HAP-1 (cell line): ENCODE measurements at regions of chr11 and their contacts with region 1.

Region 1: DNA sequence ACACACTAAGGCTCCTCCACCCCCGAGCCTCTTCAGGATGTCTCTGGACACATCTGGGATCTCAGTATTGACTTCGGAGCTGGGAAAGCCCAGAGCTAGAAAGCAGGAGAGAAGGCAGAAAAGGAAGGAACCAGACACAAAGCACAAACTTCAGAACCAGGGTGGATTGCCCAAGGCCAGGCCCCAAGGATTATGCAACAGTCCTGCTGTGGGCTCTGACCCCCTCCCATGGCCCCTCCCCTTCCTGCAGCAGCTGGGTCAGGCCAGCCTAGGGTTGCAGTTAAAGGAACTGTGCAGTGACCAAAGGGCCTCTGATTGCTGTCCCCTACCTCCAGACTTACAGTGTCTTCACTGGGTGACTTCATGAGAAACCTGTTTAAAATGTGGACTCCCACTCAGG is 5.3 kb downstream of the KCNE3 start:
- DNase-seq: peak in 1 of 2 experiments; percentile 20
- H3K4me3 ChIP-seq: no peak overlapping the region
- H3K4me1 ChIP-seq: no peaks in the 10 kb centered on the region
- H3K27me3 ChIP-seq: no peaks in the 10 kb centered on the region

Region 2: GRCh38 chr11:74255741-74256369 is 206.2 kb before region 1 on chr11:
- in situ Hi-C with region 1: loop called (anchors 5 kb)
- DNase-seq: peak; percentile 40 to 64
- H3K4me3 ChIP-seq: no peak overlapping the region
- H3K4me1 ChIP-seq: no peaks in the 10 kb centered on the region
- H3K27me3 ChIP-seq: no peaks in the 10 kb centered on the region

Region 3: GRCh38 chr11:74570266-74571061 is 108.5 kb after region 1 on chr11:
- in situ Hi-C with region 1: loop called (anchors 5 kb)
- DNase-seq: peak; percentile 50 to 66
- H3K4me3 ChIP-seq: no peak overlapping the region
- H3K4me1 ChIP-seq: no peaks in the 10 kb centered on the region; the same call in 1 of the 2 replicates
- H3K27me3 ChIP-seq: no peaks in the 10 kb centered on the region; the same call in 1 of the 2 replicates